ENCODE measurements at regions of chr13 and their contacts with region 1.

Region 1: DNA sequence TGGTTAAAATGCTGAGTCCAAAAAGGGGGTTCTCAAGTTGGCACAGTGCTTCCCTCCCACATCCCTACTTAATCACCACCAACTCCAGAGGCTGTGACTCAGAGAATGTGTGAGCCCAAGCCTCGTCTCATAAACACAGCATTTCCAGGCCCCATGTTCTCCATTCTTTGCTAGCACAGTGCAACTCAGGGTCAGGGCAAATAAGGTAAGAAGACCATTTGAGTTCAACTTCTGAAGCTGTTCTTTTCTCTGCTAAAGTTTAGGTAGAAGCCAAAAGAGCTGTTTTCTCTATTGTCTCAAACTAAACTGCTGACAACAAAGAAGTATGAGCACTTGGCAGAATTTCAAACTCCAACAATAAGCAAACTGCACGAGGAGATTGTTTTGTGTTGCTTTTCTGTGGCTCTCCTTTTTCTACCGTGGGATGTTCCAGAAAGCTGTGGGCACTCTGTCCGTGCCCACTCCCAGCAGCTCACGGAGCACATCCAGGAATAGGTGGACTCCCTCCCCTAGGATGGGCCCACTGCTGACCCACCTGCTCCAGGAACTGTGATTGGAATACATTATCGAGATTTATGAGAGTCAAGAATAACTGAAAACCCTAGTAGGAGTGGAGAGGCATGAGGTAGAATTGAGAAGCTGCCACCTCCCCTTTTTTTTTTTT is 494.3 kb downstream of the COG6 start:
- DNase-seq: peak; percentile 37
- H3K4me3 Mint-ChIP-seq: no peak overlapping the region
- H3K27ac Mint-ChIP-seq: peak overlapping the region; percentile 52
- H3K4me1 Mint-ChIP-seq: peaks cover 73% of the 10 kb centered on the region
- H3K27me3 Mint-ChIP-seq: no peaks in the 10 kb centered on the region

Region 2: GRCh38 chr13:40026174-40026585 is 123.6 kb before region 1 on chr13:
- CTCF ChIA-PET with region 1: no interaction called
- intact Hi-C with region 1: loop called (anchors 1 kb)
- DNase-seq: peak; percentile 82
- H3K4me3 Mint-ChIP-seq: no peak overlapping the region
- H3K27ac Mint-ChIP-seq: no peak overlapping the region
- H3K4me1 Mint-ChIP-seq: peaks cover 33% of the 10 kb centered on the region
- H3K27me3 Mint-ChIP-seq: peaks cover 2% of the 10 kb centered on the region

Region 3: DNA sequence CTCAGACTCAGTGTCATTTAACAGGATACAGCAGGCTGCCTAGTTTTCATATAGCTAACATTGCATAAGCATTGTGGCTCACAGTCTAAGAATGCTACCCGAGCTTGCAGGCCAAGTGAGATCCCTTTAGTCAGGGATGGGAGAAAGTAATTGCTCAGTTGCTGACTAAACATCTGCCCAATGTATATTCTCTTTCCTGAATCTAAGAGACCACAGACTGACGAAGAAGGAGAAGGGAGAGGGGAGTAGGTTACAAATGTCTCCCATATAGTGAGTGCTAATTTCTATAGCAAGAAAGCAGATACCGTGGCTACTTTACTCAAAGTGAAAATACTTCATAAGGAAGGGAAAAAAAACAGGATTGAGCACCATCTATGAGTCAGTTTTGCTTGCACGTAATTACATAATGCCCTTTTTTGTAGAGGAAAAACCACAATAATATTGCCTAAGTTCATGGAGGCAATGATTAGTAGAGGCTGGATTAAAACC is 40.3 kb before region 1 on chr13:
- CTCF ChIA-PET with region 1: interaction called, 6 read pairs
- intact Hi-C with region 1: loop called (anchors 1 kb)
- DNase-seq: peak; percentile 59
- H3K4me3 Mint-ChIP-seq: no peak overlapping the region
- H3K27ac Mint-ChIP-seq: peak overlapping the region; percentile 25
- H3K4me1 Mint-ChIP-seq: peaks cover 21% of the 10 kb centered on the region
- H3K27me3 Mint-ChIP-seq: no peaks in the 10 kb centered on the region

Region 4: GRCh38 chr13:40170982-40171381 is 21.2 kb after region 1 on chr13:
- CTCF ChIA-PET with region 1: no interaction called
- intact Hi-C with region 1: loop called (anchors 1 kb)
- DNase-seq: peak; percentile 82
- H3K4me3 Mint-ChIP-seq: no peak overlapping the region
- H3K27ac Mint-ChIP-seq: peak overlapping the region; percentile 9
- H3K4me1 Mint-ChIP-seq: peaks cover 41% of the 10 kb centered on the region
- H3K27me3 Mint-ChIP-seq: no peaks in the 10 kb centered on the region

Region 5: GRCh38 chr13:40206241-40207000 is 56.7 kb after region 1 on chr13:
- CTCF ChIA-PET with region 1: interaction called, 3 read pairs
- intact Hi-C with region 1: loop called (anchors 1 kb)
- DNase-seq: peak; percentile 74
- H3K4me3 Mint-ChIP-seq: peak overlapping the region; percentile 64
- H3K27ac Mint-ChIP-seq: peak overlapping the region; percentile 100
- H3K4me1 Mint-ChIP-seq: peaks cover 73% of the 10 kb centered on the region
- H3K27me3 Mint-ChIP-seq: no peaks in the 10 kb centered on the region

Region 6: GRCh38 chr13:40517486-40518480 is 368.0 kb after region 1 on chr13:
- CTCF ChIA-PET with region 1: no interaction called
- intact Hi-C with region 1: loop called (anchors 5 kb)
- DNase-seq: peak; percentile 57
- H3K4me3 Mint-ChIP-seq: peak overlapping the region; percentile 23
- H3K27ac Mint-ChIP-seq: peak overlapping the region; percentile 87
- H3K4me1 Mint-ChIP-seq: peaks cover 78% of the 10 kb centered on the region
- H3K27me3 Mint-ChIP-seq: no peaks in the 10 kb centered on the region